Left colon (tissue), 2 donors: ENCODE measurements at regions of chr21 and their contacts with region 1.

Region 1: GRCh38 chr21:36989699-36990507 is 16.6 kb upstream of the RIPPLY3 start:
- DNase-seq: peak; percentile 93 to 94
- ATAC-seq: peak; percentile 96

Region 2: GRCh38 chr21:37072988-37073416 is 83.1 kb after region 1 on chr21 and contains the starts of genes PIGP and TTC3:
- intact Hi-C with region 1: loop called in 1 of 2 experiments (anchors 10 kb)
- DNase-seq: peak; percentile 92 to 93
- ATAC-seq: peak; percentile 81
- total RNA-seq, gene PIGP: 18.3 to 25.1 TPM
- total RNA-seq, gene TTC3: 99.8 to 106 TPM